ENCODE measurements at regions of chr1 and their contacts with region 1.

Region 1: DNA sequence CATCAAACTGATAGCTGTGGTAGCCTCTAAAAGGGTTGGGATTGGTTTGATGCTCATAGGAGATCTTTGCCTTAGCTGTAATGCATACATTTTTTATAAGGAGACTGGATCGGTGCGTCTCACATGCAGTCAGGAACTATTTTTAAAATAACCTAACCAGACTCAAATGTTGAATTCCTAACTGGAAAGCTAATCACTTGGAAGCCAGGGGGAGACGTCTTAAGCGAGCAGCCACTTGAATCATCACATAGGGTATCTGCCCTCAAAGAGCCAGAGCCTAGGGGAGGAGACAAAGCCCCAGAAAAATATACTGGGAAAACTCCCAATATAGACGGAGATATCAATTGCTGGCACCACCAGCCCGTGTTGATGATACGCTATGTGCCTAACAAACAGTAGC is 61.7 kb upstream of the PUM1 start:
- DNase-seq: peak; percentile 29
- H3K4me3 ChIP-seq: no peak overlapping the region
- H3K27ac ChIP-seq: no peak overlapping the region
- H3K27me3 ChIP-seq: no peaks in the 10 kb centered on the region
- CTCF ChIP-seq: peak; percentile 40

Region 2: GRCh38 chr1:30977105-30977504 is 150.2 kb before region 1 on chr1:
- CTCF ChIA-PET with region 1: no interaction called
- POLR2A ChIA-PET with region 1: interaction called, 12 read pairs
- DNase-seq: peak; percentile 23
- H3K4me3 ChIP-seq: no peak overlapping the region
- H3K27ac ChIP-seq: no peak overlapping the region
- H3K27me3 ChIP-seq: no peaks in the 10 kb centered on the region
- CTCF ChIP-seq: peak; percentile 46